ENCODE measurements at regions of chr11 and their contacts with region 1.

Region 1: GRCh38 chr11:62771144-62772021 is at the start of gene TAF6L:
- DNase-seq: peak; percentile 80
- H3K4me3 ChIP-seq: peak within 1 kb of the TSS; percentile 69
- H3K27me3 ChIP-seq: no peaks in the 10 kb centered on the region
- CTCF ChIP-seq: no peak
- polyA plus RNA-seq, gene TAF6L: 9.1 and 17.0 TPM in 2 replicates

Region 2: GRCh38 chr11:62644220-62644619 is 127.2 kb before region 1 on chr11:
- CTCF ChIA-PET with region 1: no interaction called
- POLR2A ChIA-PET with region 1: no interaction called
- DNase-seq: no peak
- H3K4me3 ChIP-seq: no peak overlapping the region
- H3K27me3 ChIP-seq: no peaks in the 10 kb centered on the region
- CTCF ChIP-seq: no peak

Region 3: DNA sequence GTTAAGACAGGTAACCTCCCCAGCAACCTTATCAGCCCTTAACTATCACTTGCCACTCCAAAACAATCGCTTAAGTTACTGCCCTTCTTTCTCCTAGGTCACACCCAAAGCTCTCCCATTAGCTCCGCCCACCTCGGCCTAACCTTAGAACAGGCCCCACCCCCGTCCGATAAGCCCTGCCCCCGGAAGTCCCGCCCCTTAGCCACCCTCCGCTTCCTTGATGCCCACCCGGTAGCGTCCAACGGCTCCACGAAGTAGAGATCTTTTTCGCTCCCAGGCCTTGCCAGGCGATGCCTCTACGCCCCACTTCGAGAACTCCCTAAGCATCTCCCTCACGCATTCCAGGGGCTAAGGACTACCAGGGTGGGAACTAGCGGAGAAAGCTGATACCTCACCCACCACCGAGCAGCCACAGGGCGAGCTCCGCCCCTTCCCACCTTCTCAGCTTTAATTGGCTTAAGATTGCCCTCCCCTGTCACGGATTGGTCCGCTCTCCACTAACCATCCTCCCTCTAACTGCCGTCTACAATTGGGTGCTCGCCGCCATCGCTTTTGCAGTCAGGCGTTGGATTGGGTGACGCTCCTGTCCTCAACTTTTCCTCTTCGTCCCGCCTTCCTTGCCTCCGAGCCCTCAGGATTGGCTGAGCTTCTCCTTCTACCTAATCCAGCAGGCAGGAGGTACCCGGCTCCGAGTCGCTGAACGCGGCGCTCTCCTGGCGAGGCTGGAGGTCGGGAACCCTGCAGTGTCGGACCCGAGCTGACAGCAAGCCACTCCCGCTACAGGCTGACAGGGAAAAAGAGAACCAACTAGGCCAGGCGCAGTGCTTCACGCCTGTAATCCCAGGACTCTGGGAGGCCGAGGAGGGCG is 17.4 kb before region 1 on chr11 and contains the start of gene ZBTB3:
- CTCF ChIA-PET with region 1: interaction called, 6 read pairs
- POLR2A ChIA-PET with region 1: interaction called, 20 read pairs
- DNase-seq: peak; percentile 98
- H3K4me3 ChIP-seq: peak within 1 kb of the TSS; percentile 75
- H3K27me3 ChIP-seq: no peaks in the 10 kb centered on the region
- CTCF ChIP-seq: no peak
- polyA plus RNA-seq, gene ZBTB3: 3.5 and 3.8 TPM in 2 replicates

Measured in BJ (cell line).